ENCODE measurements at regions of chrX and their contacts with region 1.

Region 1: DNA sequence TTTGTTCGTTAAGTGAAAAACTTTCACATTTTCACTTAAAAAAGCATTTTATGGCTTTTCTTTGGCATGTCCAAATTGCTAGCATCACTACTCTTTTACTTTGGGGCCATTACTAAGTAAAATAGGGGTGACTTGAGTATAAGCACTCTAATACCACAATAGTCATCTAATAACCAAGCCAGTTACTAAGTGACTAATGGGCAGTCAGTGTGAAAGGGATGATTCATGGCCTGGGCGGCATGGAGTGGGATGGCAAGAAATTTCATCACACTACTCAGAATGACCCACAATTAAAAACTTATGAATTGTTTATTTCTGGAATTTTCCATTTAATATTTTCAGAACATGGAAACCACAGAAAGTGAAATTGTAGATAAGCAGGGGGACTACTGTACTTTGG is 60.9 kb downstream of the BMP15 start:
- DNase-seq: no peak
- H3K4me3 ChIP-seq: no peak overlapping the region
- H3K27ac ChIP-seq: no peak overlapping the region
- H3K4me1 ChIP-seq: no peaks in the 10 kb centered on the region
- H3K27me3 ChIP-seq: no peaks in the 10 kb centered on the region
- CTCF ChIP-seq: no peak
- EP300 ChIP-seq: no peak
- POLR2A ChIP-seq: no peak

Region 2: GRCh38 chrX:51024077-51024696 is 52.8 kb after region 1 on chrX:
- intact Hi-C with region 1: loop called in 1 of 4 experiments (anchors 5 kb)
- DNase-seq: no peak
- H3K4me3 ChIP-seq: no peak overlapping the region
- H3K27ac ChIP-seq: no peak overlapping the region
- H3K4me1 ChIP-seq: no peaks in the 10 kb centered on the region
- H3K27me3 ChIP-seq: no peaks in the 10 kb centered on the region
- CTCF ChIP-seq: no peak
- EP300 ChIP-seq: no peak
- POLR2A ChIP-seq: no peak

Region 3: GRCh38 chrX:51192104-51192503 is 220.7 kb after region 1 on chrX:
- intact Hi-C with region 1: no loop called
- DNase-seq: no peak
- H3K4me3 ChIP-seq: no peak overlapping the region
- H3K27ac ChIP-seq: no peak overlapping the region
- H3K4me1 ChIP-seq: no peaks in the 10 kb centered on the region
- H3K27me3 ChIP-seq: no peaks in the 10 kb centered on the region
- CTCF ChIP-seq: no peak
- EP300 ChIP-seq: no peak
- POLR2A ChIP-seq: no peak